Head of caudate nucleus (tissue), 42 donors: ENCODE measurements at regions of chr5 and their contacts with region 1.

Region 1: DNA sequence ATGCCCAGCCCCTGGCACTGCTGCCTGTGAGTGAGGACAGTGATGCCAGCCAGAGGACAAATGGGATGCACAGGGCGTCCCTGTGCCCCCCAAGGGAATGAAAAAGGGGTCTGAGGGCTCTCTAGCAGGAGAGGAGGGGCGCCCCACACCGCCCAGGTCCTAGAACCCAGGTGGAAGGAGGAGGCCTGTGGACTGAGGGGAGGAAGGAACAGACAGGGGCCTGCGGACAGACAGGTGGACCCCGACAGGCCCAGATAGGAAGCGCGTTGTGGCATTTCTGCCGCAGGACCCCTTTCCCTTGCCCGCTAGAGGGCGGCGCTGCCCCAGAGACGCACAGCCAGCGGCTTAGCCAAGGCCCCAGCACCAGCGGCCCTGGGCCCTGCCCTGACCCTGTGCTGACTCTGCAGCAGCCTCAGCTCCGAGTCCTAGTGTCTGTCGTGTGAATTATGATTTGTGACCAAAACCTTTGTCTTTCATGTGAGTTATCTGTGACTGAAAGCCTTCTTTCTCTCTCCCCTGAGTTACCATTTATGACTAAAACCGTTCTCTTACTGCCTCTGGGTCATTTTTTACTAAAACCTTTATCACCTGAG is 30.7 kb downstream of the TRIP13 start:
- DNase-seq: peak in 41 of 42 donors; percentile 38 to 88 (median 71)

Region 2: GRCh38 chr5:1167728-1168709 is 244.6 kb after region 1 on chr5:
- intact Hi-C with region 1: loop called (anchors 10 kb)
- DNase-seq: peak; percentile 47 to 92 (median 81)